GM12878 (cell line): ENCODE measurements at regions of chr5 and their contacts with region 1.

Region 1: DNA sequence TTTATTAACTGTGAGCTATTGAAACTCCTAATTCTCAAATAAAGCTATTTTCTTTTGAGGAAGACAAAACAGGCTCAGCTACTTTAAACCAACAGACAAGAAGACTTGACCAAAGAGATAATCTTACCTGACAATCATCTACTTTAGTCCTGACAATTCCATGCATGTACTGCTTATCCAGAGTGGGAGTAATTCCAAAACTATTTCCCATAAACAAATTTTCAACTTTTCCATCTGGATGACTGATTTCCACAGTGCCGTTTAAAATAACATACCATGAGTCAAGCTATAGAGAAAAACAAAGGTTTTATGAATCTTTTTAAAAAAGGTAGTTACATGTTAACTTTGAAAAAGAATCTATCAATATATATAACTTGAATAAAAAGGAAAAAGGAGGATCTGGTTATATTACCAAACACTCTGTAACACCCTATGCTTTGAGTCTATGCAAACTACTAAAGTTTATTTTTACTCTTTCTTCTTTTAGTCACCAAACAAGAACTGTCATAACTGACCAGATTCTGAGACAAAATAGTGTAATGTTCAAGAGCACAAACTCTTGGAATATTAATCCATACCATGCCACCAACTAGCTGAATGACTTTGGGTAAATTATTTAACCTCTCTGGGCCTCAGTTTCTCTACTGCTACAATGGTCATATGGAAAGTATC is 129.7 kb downstream of the RAPGEF6 start:
- DNase-seq: no peak
- ATAC-seq: no peak; the same call in 2 of the 3 replicates
- H3K4me3 ChIP-seq: no peak overlapping the region
- H3K27ac ChIP-seq: peak overlapping the region; percentile 48; the same call in 1 of the 2 replicates
- H3K4me1 ChIP-seq: no peaks in the 10 kb centered on the region
- H3K27me3 ChIP-seq: no peaks in the 10 kb centered on the region
- CTCF ChIP-seq: no peak
- EP300 ChIP-seq: no peak
- POLR2A ChIP-seq: no peak
- RAD21 ChIP-seq: no peak

Region 2: DNA sequence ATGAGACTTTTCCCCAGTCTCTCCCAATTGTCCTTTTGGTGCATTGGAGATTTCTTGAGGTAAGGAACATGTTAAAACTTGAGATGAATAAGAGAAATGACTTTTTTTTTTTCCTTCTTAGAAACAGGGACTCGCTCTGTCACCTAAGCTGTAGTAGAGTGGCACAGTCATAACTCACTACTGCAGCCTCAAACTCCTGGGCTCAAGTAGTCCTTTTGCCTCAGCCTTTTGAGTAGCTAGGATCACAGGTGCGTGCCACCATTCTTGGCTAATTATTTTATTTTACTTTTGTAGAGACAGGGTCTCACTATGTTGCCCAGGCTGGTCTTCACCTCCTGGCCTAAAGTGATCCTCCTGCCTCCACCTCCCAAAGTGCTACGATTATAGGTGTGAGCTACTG is 215.6 kb before region 1 on chr5:
- CTCF ChIA-PET with region 1: no interaction called
- POLR2A ChIA-PET with region 1: no interaction called
- RAD21 ChIA-PET with region 1: no interaction called
- SMC1A ChIA-PET with region 1: no interaction called
- in situ Hi-C with region 1: no loop called
- intact Hi-C with region 1: no loop called
- DNase-seq: no peak
- ATAC-seq: peak; percentile 60
- H3K4me3 ChIP-seq: peak overlapping the region; percentile 57; the same call in 1 of the 2 replicates
- H3K27ac ChIP-seq: peak overlapping the region; percentile 82
- H3K4me1 ChIP-seq: peaks cover 33% of the 10 kb centered on the region
- H3K27me3 ChIP-seq: no peaks in the 10 kb centered on the region
- CTCF ChIP-seq: no peak
- EP300 ChIP-seq: no peak
- POLR2A ChIP-seq: no peak
- RAD21 ChIP-seq: no peak

Region 3: GRCh38 chr5:131453826-131454225 is 51.5 kb before region 1 on chr5:
- CTCF ChIA-PET with region 1: no interaction called
- POLR2A ChIA-PET with region 1: no interaction called
- RAD21 ChIA-PET with region 1: no interaction called
- SMC1A ChIA-PET with region 1: no interaction called
- in situ Hi-C with region 1: no loop called
- intact Hi-C with region 1: no loop called
- DNase-seq: no peak
- ATAC-seq: no peak
- H3K4me3 ChIP-seq: no peak overlapping the region
- H3K27ac ChIP-seq: no peak overlapping the region
- H3K4me1 ChIP-seq: no peaks in the 10 kb centered on the region
- H3K27me3 ChIP-seq: no peaks in the 10 kb centered on the region
- CTCF ChIP-seq: no peak
- EP300 ChIP-seq: no peak
- POLR2A ChIP-seq: no peak
- RAD21 ChIP-seq: no peak

Region 4: DNA sequence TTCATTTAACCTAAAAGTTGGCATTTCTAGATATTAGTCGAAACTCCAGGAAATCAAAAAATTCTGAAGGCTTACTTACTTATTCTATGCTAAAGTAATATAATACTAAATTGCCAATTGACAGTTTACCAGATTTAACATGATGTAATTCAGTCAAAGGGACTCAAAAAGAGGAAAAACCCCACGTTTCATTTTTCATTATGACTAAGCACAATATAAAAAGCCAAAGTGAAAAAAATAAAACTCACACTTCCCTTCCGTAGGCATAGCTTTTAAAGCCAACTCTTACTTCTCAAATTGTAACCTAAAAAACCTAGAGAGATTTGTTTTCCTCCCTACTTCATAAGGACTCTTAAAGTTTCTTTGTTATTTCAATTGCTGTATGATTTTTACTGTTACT is 16.9 kb before region 1 on chr5:
- CTCF ChIA-PET with region 1: interaction called, 6 read pairs
- POLR2A ChIA-PET with region 1: interaction called, 4 read pairs
- RAD21 ChIA-PET with region 1: interaction called, 4 read pairs
- SMC1A ChIA-PET with region 1: interaction called, 19 read pairs
- in situ Hi-C with region 1: no loop called
- intact Hi-C with region 1: no loop called
- DNase-seq: peak; percentile 82
- ATAC-seq: peak; percentile 93
- H3K4me3 ChIP-seq: 0 out of 2 replicates have a peak overlapping the region, but pooled peaks have one; percentile 4
- H3K27ac ChIP-seq: peak overlapping the region; percentile 88
- H3K4me1 ChIP-seq: peaks cover 23% of the 10 kb centered on the region
- H3K27me3 ChIP-seq: no peaks in the 10 kb centered on the region
- CTCF ChIP-seq: no peak
- EP300 ChIP-seq: peak; percentile 73 to 84
- POLR2A ChIP-seq: no peak
- RAD21 ChIP-seq: no peak

Region 5: GRCh38 chr5:131610198-131611063 is 105.1 kb after region 1 on chr5:
- CTCF ChIA-PET with region 1: no interaction called
- POLR2A ChIA-PET with region 1: no interaction called
- RAD21 ChIA-PET with region 1: no interaction called
- SMC1A ChIA-PET with region 1: no interaction called
- in situ Hi-C with region 1: no loop called
- intact Hi-C with region 1: no loop called
- DNase-seq: no peak
- ATAC-seq: no peak
- H3K4me3 ChIP-seq: no peak overlapping the region
- H3K27ac ChIP-seq: no peak overlapping the region
- H3K4me1 ChIP-seq: peaks cover 4% of the 10 kb centered on the region
- H3K27me3 ChIP-seq: no peaks in the 10 kb centered on the region
- CTCF ChIP-seq: no peak
- EP300 ChIP-seq: no peak
- POLR2A ChIP-seq: no peak
- RAD21 ChIP-seq: no peak